Mammary epithelial cell (primary cell): ENCODE measurements at regions of chr17 and their contacts with region 1.

Region 1: DNA sequence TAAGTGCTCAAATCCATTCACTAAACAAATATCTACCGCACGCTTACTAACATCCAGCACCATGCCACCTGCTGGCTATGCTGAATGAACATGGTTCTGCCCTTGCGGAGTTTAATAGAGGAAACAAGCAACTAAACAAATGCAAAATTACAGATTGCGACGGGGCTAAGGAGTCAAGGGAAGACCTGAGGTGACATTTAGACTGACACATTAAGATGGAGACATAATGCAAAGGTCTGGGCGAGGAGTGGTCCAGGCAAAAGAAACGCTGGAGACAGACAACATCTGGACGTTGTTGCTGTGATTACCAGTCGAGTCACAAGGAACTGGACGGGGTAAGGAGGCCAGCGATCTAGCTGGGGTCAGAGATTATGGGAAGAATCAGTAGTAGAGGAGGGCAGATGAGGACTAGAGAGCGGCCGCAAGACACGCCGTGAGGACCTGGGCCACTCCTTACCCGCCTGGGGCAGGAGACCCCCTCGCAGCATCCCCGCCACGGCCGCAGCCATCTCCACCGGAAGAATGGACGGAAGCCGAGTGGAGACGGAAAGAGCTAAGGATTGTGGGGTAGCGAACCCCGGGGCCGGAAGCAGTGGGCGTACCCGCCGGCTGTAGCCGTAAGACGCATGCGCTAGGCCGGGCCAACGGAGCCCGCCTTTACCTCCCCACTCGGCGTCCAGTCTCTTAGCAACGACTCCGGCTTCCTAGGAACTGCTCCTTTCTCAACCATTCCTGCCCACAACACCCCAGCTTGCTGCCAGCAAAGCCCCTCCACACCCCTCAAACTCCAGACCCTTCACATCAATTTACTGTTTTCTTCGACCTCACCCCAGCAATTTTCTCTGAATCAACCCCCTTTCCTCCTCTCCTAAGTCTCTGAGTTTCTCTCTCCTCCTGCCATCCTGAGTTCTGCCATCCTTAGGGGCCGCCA is at the starts of genes LRRC46 and MRPL10:
- DNase-seq: peak; percentile 86
- H3K4me3 ChIP-seq: peak within 1 kb of the TSS; percentile 66 to 98 (median 77)
- H3K27ac ChIP-seq: peak within 1 kb of the TSS; percentile 65
- H3K4me1 ChIP-seq: peaks cover 20% of the 10 kb centered on the region
- H3K27me3 ChIP-seq: no peaks in the 10 kb centered on the region
- CTCF ChIP-seq: peak; percentile 51 to 53
- total RNA-seq, gene LRRC46: 0.54 TPM in 1 of 2 donors, not detected in the other
- total RNA-seq, gene MRPL10: 18.2 to 39.4 TPM

Region 2: GRCh38 chr17:47872021-47872650 is 40.9 kb after region 1 on chr17:
- CTCF ChIA-PET with region 1: no interaction called
- dilution Hi-C with region 1: loop called (anchors 5 kb)
- in situ Hi-C with region 1: no loop called
- intact Hi-C with region 1: no loop called
- DNase-seq: peak; percentile 42
- H3K4me3 ChIP-seq: no peak overlapping the region
- H3K27ac ChIP-seq: no peak overlapping the region
- H3K4me1 ChIP-seq: peaks cover 17% of the 10 kb centered on the region
- H3K27me3 ChIP-seq: no peaks in the 10 kb centered on the region
- CTCF ChIP-seq: no peak